ENCODE measurements at regions of chr6 and their contacts with region 1.

Region 1: GRCh38 chr6:46606338-46606737 is 46.3 kb downstream of the CYP39A1 start:
- DNase-seq: no peak
- H3K4me3 ChIP-seq: no peak overlapping the region
- H3K27ac ChIP-seq: no peak overlapping the region
- H3K4me1 ChIP-seq: no peaks in the 10 kb centered on the region
- H3K27me3 ChIP-seq: no peaks in the 10 kb centered on the region

Region 2: GRCh38 chr6:45514454-45515230 is 1091.7 kb before region 1 on chr6:
- in situ Hi-C with region 1: no loop called
- DNase-seq: no peak
- H3K4me3 ChIP-seq: no peak overlapping the region
- H3K27ac ChIP-seq: no peak overlapping the region
- H3K4me1 ChIP-seq: peaks cover 8% of the 10 kb centered on the region; the same call in 1 of the 2 replicates
- H3K27me3 ChIP-seq: no peaks in the 10 kb centered on the region

Region 3: DNA sequence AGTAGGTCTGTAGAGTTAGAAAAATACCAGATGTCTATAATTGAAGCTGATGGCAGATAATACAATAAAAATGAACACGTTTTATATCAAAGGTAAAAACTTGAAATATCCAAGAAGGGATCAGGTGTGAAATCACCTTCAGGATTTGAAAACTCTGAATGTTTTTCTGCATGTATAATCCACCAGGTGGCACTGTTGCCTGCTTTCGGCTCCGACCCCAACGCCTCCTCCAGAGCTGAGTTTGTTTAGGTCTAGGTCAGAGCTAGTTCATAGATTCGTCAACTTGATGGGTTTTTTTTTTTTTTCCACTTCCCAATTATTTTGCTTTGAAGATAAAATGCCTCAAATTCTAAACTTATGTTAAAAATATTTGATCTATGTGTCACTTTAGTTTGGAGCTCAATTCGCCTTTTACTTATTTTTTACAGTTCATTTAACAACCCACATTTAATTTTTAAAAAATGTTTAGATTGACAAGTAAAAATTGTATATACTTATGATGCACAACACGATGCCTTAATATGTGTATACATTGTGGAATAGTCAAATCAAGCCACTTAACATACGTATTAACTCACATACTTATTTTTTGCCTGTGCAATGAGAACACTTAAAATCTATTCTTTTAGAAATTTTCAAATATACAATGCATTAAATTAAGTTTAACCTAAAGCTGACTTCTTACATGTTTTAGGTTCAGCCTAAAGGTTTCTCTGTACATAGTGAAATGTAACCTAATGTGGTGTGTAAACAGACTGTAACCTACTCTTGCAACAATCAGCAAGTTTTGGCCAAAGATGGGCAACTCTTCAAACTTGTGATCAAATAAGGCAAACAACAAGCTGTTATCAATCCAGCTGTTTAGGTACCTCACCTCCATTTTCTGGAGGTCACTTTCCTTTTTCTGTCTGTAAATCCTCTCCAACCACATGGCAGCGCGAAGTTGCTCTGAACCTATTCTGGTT is 515.9 kb before region 1 on chr6:
- in situ Hi-C with region 1: loop called (anchors 25 kb)
- DNase-seq: peak; percentile 72
- H3K4me3 ChIP-seq: no peak overlapping the region
- H3K27ac ChIP-seq: no peak overlapping the region
- H3K4me1 ChIP-seq: no peaks in the 10 kb centered on the region
- H3K27me3 ChIP-seq: peaks cover 6% of the 10 kb centered on the region

Region 4: DNA sequence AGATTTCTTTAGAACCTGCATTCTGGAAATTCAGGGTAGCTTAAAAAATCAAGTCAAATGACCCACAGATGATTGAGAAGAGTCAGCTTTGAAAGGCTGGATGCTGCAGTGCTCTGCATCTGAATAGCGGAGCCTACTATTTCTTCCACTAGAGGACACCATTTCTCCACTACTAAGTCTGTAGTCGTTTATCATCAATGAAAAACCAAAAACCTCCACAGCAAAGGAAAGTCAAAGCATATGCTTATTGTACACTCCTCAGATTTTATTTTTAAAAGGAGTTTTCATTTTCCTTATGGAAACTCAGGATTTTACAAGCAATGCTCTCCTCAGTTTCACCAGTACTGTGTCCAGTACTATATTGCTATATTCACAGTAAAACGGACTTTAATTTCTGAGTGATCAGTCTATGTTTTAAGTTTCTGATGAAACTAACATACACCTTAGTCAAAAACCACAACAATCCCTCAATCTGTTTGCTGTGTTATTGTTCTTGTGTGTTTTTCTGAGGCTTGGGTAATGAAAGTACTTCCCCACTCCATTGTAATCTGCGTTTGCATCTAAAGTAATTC is 385.0 kb before region 1 on chr6:
- in situ Hi-C with region 1: loop called (anchors 25 kb)
- DNase-seq: peak; percentile 72
- H3K4me3 ChIP-seq: no peak overlapping the region
- H3K27ac ChIP-seq: no peak overlapping the region
- H3K4me1 ChIP-seq: no peaks in the 10 kb centered on the region
- H3K27me3 ChIP-seq: no peaks in the 10 kb centered on the region

Region 5: DNA sequence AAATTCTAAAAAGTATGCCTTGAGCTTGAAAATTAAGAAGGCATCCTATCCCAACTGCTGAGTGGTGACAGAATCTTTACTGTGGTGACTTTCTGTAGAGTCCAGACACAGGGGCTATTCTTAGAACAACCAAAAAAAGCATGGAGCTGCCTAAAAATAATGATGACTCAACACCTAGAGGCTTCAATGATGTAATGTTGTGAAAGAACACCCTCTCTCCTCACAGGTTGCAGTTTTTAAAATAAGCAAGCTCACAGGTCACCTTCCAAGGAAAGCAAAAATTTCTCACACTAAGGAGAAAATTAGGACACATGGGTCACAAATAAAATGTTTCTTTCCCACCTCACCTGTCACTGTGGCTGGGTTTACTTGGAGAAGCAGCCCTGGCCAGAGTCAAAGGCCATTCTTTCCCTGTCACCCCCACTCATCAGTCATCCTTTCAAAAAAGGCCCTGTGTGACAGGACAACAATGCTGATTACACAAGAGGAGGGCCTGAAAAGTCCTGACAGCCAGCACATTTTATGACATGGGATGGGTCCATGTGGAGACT is 168.6 kb before region 1 on chr6:
- in situ Hi-C with region 1: no loop called
- DNase-seq: peak; percentile 82
- H3K4me3 ChIP-seq: no peak overlapping the region
- H3K27ac ChIP-seq: peak overlapping the region; percentile 50
- H3K4me1 ChIP-seq: peaks cover 38% of the 10 kb centered on the region
- H3K27me3 ChIP-seq: no peaks in the 10 kb centered on the region